WTC11 (cell line): ENCODE measurements at regions of chr9 and their contacts with region 1.

Region 1: DNA sequence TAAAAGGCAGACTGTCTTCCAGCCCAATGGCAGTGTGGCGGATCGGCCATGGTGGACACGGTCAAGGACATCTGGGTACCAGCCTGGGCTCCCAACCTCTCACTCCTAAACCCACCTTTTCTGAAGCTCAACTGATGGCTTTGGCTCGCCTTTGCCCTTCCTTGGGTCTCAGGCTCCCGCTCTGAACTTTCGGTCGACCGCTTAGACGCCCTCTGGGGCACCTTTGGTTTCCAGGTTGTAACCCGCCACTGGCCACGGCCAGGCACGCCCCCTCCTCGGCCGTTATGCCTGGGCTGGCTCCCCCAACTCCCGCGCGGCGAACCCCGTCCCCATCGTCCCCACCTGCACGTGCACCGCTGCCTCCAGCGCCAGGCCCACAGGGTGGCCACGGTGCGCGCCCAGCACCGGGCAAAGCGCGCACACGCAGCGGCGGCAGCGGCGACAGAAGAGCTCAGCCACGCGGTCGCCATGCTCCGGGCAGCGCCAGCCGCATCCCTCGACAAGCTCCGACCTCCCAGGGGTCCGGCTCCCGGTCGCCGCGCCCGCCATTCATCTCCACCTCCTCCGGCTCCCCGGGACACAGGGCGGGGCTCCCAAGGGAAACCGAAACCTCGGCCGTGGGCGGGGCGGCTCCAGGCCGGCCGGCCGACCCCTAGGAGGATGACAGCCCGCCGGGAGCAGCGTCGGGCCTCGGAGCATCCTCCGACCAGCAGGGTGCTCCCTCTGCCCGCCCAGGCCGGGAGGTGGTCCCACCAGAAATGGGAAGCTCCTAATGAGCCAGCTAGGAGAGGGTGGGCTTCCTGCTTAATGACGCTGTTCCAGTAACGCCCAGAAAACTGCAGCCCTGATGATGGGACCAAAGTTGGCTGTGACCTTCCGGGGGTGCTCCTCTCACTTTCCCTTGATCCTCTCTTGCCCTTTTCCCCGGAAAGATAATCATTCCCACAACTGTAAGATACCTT is at the start of gene TRIM14:
- DNase-seq: peak; percentile 73
- ATAC-seq: peak; percentile 76
- H3K4me3 Mint-ChIP-seq: peak within 1 kb of the TSS; percentile 66
- H3K27ac Mint-ChIP-seq: no peak within 1 kb of the TSS; the same call in 1 of the 2 replicates
- H3K4me1 Mint-ChIP-seq: peaks cover 19% of the 10 kb centered on the region
- H3K27me3 Mint-ChIP-seq: peaks cover 20% of the 10 kb centered on the region
- CTCF ChIP-seq: no peak
- total RNA-seq, gene TRIM14: 11.9 to 18.4 TPM (median 18.2 TPM) in 3 replicates

Region 2: GRCh38 chr9:98091881-98092612 is 26.9 kb before region 1 on chr9:
- CTCF ChIA-PET with region 1: interaction called, 11 read pairs
- POLR2A ChIA-PET with region 1: interaction called, 3 read pairs
- DNase-seq: peak; percentile 37
- ATAC-seq: peak; percentile 34
- H3K4me3 Mint-ChIP-seq: peak overlapping the region; percentile 51
- H3K27ac Mint-ChIP-seq: peak overlapping the region; percentile 80
- H3K4me1 Mint-ChIP-seq: peaks cover 42% of the 10 kb centered on the region
- H3K27me3 Mint-ChIP-seq: peaks cover 17% of the 10 kb centered on the region
- CTCF ChIP-seq: no peak

Region 3: GRCh38 chr9:98101868-98102273 is 17.1 kb before region 1 on chr9:
- CTCF ChIA-PET with region 1: interaction called, 12 read pairs
- POLR2A ChIA-PET with region 1: no interaction called
- DNase-seq: no peak
- ATAC-seq: peak; percentile 86
- H3K4me3 Mint-ChIP-seq: no peak overlapping the region
- H3K27ac Mint-ChIP-seq: no peak overlapping the region
- H3K4me1 Mint-ChIP-seq: peaks cover 18% of the 10 kb centered on the region
- H3K27me3 Mint-ChIP-seq: no peaks in the 10 kb centered on the region
- CTCF ChIP-seq: no peak

Region 4: GRCh38 chr9:98129451-98129881 is 10.5 kb after region 1 on chr9:
- CTCF ChIA-PET with region 1: no interaction called
- POLR2A ChIA-PET with region 1: no interaction called
- DNase-seq: no peak
- ATAC-seq: no peak
- H3K4me3 Mint-ChIP-seq: no peak overlapping the region
- H3K27ac Mint-ChIP-seq: peak overlapping the region; percentile 19; the same call in 1 of the 2 replicates
- H3K4me1 Mint-ChIP-seq: peaks cover 6% of the 10 kb centered on the region
- H3K27me3 Mint-ChIP-seq: no peaks in the 10 kb centered on the region
- CTCF ChIP-seq: no peak

Region 5: DNA sequence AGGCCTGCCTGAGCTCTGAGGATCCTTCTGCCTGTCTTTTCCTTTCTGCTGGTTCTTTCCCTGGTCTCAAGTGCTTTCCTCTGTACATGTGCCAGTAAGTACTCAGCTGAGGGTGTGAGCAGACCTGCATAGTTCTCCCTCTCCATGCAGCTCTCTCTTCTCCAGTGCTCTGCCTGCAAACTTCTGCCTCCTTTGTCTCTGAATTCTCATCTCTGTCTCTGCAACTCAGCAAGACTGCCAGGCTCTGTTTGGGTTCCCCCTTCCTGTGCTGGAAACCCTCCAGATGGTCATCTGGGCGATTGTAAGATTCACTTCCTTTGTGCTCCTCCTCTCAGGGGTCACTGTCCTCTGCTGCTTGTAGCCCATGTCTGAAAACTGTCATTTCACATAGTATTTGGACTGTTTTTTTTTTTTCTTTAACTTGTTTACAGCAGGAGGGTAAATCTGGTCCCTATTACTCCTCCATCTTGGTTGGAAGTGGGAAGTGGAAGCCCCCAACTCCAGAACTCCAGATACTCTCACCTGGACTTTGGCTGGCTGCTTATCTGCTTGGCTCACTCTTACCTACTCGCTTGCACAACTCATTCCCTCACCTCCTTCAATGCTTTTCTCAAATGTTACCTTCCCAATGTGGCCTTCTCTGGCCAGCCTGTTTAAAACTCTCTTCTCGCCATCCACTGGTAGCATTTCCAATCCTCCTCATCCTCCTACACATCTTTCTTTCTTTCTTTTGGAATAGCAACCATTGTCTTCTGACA is 311.8 kb after region 1 on chr9:
- CTCF ChIA-PET with region 1: no interaction called
- POLR2A ChIA-PET with region 1: no interaction called
- DNase-seq: no peak
- ATAC-seq: no peak
- H3K4me3 Mint-ChIP-seq: no peak overlapping the region
- H3K27ac Mint-ChIP-seq: no peak overlapping the region
- H3K4me1 Mint-ChIP-seq: no peaks in the 10 kb centered on the region
- H3K27me3 Mint-ChIP-seq: peaks cover 8% of the 10 kb centered on the region
- CTCF ChIP-seq: no peak